ENCODE measurements at regions of chr4 and their contacts with region 1.

Region 1: DNA sequence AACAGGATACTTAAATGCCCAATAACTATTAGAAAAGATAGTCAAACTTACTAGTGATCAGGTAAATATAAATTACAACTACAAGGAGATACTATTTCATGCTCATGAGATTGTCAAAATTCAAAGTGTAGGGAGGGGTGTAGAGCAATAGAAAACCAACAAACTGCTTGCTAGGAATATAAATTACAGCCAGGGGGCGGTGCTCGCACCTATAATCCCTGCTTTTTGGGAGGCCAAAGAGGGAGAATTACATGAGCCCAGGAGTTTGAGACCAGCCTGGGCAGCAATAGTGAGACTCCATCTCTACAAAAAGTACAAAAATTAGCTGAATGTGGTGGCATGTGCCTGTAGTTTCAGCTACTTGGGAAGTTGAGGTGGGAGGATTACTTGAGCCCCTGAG is 556.5 kb upstream of the NR3C2 start:
- DNase-seq: no peak
- H3K4me3 ChIP-seq: no peak overlapping the region
- H3K27ac ChIP-seq: no peak overlapping the region
- H3K4me1 ChIP-seq: no peaks in the 10 kb centered on the region
- H3K27me3 ChIP-seq: no peaks in the 10 kb centered on the region
- CTCF ChIP-seq: no peak

Region 2: DNA sequence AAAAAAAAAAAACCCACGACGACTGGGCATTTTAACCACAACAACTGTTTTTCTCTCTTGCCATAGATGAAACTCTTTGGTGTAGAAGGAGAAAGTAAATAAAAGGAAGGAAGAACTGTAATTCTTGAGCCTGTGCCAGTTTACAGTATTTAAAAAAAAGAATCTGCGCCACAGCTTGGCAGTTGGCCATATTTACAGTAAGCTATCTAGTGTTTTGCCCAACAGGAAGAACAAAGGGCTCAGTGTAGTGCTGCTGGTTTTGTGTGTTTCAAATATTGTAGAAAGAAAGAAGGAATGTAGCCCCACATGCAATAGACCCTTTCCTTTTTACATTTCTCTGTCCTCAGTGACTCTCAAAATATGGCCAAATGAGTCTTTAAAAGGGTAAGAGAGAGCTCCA is 622.6 kb before region 1 on chr4:
- CTCF ChIA-PET with region 1: no interaction called
- POLR2A ChIA-PET with region 1: interaction called, 11 read pairs
- intact Hi-C with region 1: no loop called
- DNase-seq: peak; percentile 41 to 55
- H3K4me3 ChIP-seq: no peak overlapping the region
- H3K27ac ChIP-seq: no peak overlapping the region
- H3K4me1 ChIP-seq: peaks cover 11% of the 10 kb centered on the region; the same call in 1 of the 2 replicates
- H3K27me3 ChIP-seq: no peaks in the 10 kb centered on the region
- CTCF ChIP-seq: no peak

Region 3: GRCh38 chr4:148574502-148574901 is 424.2 kb before region 1 on chr4:
- CTCF ChIA-PET with region 1: no interaction called
- POLR2A ChIA-PET with region 1: no interaction called
- intact Hi-C with region 1: no loop called
- DNase-seq: no peak
- H3K4me3 ChIP-seq: no peak overlapping the region
- H3K27ac ChIP-seq: no peak overlapping the region
- H3K4me1 ChIP-seq: no peaks in the 10 kb centered on the region
- H3K27me3 ChIP-seq: no peaks in the 10 kb centered on the region
- CTCF ChIP-seq: no peak

Region 4: GRCh38 chr4:148589182-148589581 is 409.5 kb before region 1 on chr4:
- CTCF ChIA-PET with region 1: no interaction called
- POLR2A ChIA-PET with region 1: no interaction called
- intact Hi-C with region 1: no loop called
- DNase-seq: no peak
- H3K4me3 ChIP-seq: no peak overlapping the region
- H3K27ac ChIP-seq: no peak overlapping the region
- H3K4me1 ChIP-seq: no peaks in the 10 kb centered on the region
- H3K27me3 ChIP-seq: no peaks in the 10 kb centered on the region
- CTCF ChIP-seq: no peak

Measured in PC-9 (cell line).